ENCODE measurements at regions of chr5 and their contacts with region 1.

Region 1: GRCh38 chr5:177189416-177189815 is 55.8 kb downstream of the NSD1 start:
- DNase-seq: no peak
- H3K4me3 Mint-ChIP-seq: no peak overlapping the region
- H3K27ac Mint-ChIP-seq: no peak overlapping the region
- H3K4me1 Mint-ChIP-seq: no peaks in the 10 kb centered on the region
- H3K27me3 Mint-ChIP-seq: no peaks in the 10 kb centered on the region
- CTCF ChIP-seq: no peak

Region 2: GRCh38 chr5:176979669-176980068 is 209.7 kb before region 1 on chr5:
- CTCF ChIA-PET with region 1: no interaction called
- intact Hi-C with region 1: loop called (anchors 10 kb)
- DNase-seq: no peak
- H3K4me3 Mint-ChIP-seq: no peak overlapping the region
- H3K27ac Mint-ChIP-seq: no peak overlapping the region
- H3K4me1 Mint-ChIP-seq: no peaks in the 10 kb centered on the region
- H3K27me3 Mint-ChIP-seq: no peaks in the 10 kb centered on the region
- CTCF ChIP-seq: no peak

Region 3: DNA sequence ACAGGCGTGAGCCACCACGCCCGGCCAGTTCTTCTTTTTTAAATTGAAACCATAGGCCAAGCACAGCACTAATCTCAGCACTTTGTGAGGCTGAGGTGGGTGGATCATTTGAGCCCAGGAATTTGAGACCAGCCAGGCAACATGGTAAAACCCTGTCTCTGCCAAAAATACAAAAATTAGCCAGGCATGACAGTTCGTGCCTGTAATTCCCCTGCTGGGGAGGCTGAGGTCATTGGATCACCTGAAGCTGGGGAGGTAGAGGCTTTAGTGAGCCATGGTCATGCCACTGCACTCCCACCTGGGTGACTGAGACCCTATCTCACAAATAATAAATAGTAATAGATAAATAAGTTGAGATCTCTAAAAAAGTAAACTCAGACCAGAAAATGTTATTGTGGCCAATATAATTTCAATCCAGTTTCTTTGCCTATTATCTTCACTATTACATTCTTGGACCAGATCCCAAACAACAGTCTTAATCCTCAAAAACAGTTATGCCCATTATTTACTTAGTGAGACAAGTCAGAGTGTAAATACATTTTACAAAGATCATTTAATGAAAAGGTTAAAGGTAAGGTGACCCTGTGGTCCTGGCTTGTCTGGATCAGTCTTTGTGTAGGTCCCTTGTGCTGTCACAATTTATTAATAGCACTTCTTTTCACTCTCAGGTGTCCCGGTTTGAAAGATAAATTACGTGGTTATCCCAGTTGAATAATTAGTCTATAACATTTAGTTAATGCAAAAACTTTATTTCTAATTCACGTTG is 60.5 kb after region 1 on chr5:
- CTCF ChIA-PET with region 1: no interaction called
- intact Hi-C with region 1: no loop called
- DNase-seq: no peak
- H3K4me3 Mint-ChIP-seq: no peak overlapping the region
- H3K27ac Mint-ChIP-seq: no peak overlapping the region
- H3K4me1 Mint-ChIP-seq: no peaks in the 10 kb centered on the region
- H3K27me3 Mint-ChIP-seq: no peaks in the 10 kb centered on the region
- CTCF ChIP-seq: no peak